ENCODE measurements at regions of chr7 and their contacts with region 1.

Region 1: DNA sequence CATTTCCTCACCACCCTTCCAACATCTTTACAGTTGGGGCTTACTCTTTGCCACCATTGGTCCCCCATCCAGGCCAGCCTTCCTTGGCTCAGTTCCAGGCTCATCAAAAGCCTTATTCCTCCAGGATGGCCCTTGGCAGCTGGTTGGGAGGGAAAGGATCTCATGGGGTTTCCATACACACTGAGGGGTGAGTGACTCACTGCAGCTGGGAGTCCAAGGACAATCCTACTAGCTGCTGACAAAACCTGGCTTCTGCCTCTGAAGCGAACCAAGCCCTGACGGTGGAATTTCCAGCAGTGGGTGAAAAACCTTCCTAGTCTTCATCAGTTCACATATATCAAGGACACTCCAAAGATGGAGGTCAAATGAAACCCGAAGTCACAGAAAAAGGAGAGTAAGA is 22.9 kb downstream of the CRHR2 start:
- DNase-seq: no peak
- ATAC-seq: no peak
- H3K4me3 ChIP-seq: no peak overlapping the region
- H3K27ac ChIP-seq: no peak overlapping the region
- H3K4me1 ChIP-seq: peaks cover 0 to 3% of the 10 kb centered on the region in 2 experiments; a peak in 1 of 5 replicates
- H3K27me3 ChIP-seq: peaks cover 4 to 69% of the 10 kb centered on the region in 2 experiments; a peak in 4 of 5 replicates
- CTCF ChIP-seq: no peak
- EP300 ChIP-seq: no peak
- POLR2A ChIP-seq: no peak
- RAD21 ChIP-seq: no peak

Region 2: GRCh38 chr7:30164567-30164966 is 494.7 kb before region 1 on chr7:
- CTCF ChIA-PET with region 1: no interaction called
- POLR2A ChIA-PET with region 1: no interaction called
- in situ Hi-C with region 1: no loop called
- intact Hi-C with region 1: no loop called
- DNase-seq: peak; percentile 37 to 59 (median 50)
- ATAC-seq: peak; percentile 70
- H3K4me3 ChIP-seq: no peak overlapping the region
- H3K27ac ChIP-seq: no peak overlapping the region
- H3K4me1 ChIP-seq: peaks cover 12 to 39% of the 10 kb centered on the region in 2 experiments
- H3K27me3 ChIP-seq: peaks cover 26 to 34% of the 10 kb centered on the region in 2 experiments
- CTCF ChIP-seq: peak; percentile 54 to 81 (median 63); a peak in 4 of 6 replicates
- EP300 ChIP-seq: no peak
- POLR2A ChIP-seq: no peak
- RAD21 ChIP-seq: peak; percentile 75 to 79

Region 3: GRCh38 chr7:30225863-30226613 is 433.3 kb before region 1 on chr7:
- CTCF ChIA-PET with region 1: no interaction called
- POLR2A ChIA-PET with region 1: no interaction called
- in situ Hi-C with region 1: no loop called
- intact Hi-C with region 1: no loop called
- DNase-seq: no peak
- ATAC-seq: no peak; the same call in 2 of the 3 replicates
- H3K4me3 ChIP-seq: no peak overlapping the region
- H3K27ac ChIP-seq: no peak overlapping the region
- H3K4me1 ChIP-seq: no peaks in the 10 kb centered on the region
- H3K27me3 ChIP-seq: peaks cover 5 to 41% of the 10 kb centered on the region in 2 experiments; a peak in 4 of 5 replicates
- CTCF ChIP-seq: no peak
- EP300 ChIP-seq: no peak
- POLR2A ChIP-seq: no peak
- RAD21 ChIP-seq: no peak

Region 4: GRCh38 chr7:30585675-30586074 is 73.6 kb before region 1 on chr7:
- CTCF ChIA-PET with region 1: no interaction called
- POLR2A ChIA-PET with region 1: no interaction called
- in situ Hi-C with region 1: no loop called
- intact Hi-C with region 1: no loop called
- DNase-seq: no peak
- ATAC-seq: no peak
- H3K4me3 ChIP-seq: no peak overlapping the region
- H3K27ac ChIP-seq: no peak overlapping the region
- H3K4me1 ChIP-seq: no peaks in the 10 kb centered on the region
- H3K27me3 ChIP-seq: no peaks in the 10 kb centered on the region
- CTCF ChIP-seq: no peak
- EP300 ChIP-seq: no peak
- POLR2A ChIP-seq: no peak
- RAD21 ChIP-seq: no peak

Region 5: DNA sequence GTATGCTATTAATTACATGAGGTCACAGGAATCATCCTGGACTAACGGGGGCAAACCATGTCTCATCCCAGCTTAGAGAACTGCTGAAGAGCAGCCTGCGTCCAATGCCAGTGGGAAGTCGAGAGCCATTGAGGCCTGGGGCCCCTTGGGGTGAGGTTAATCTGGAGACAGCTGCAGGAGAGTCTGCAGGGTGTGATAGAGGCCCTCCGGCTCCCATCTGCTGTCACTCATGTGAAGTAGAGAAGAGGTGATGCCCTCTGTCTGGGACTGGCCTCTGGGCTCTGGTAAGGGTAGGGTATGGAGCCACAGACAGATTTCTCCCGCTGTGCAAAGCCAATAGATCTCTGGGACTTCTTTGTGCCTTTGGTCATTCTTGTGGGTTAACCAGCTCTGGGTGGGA is 11.7 kb before region 1 on chr7:
- CTCF ChIA-PET with region 1: no interaction called
- POLR2A ChIA-PET with region 1: interaction called, 16 read pairs
- in situ Hi-C with region 1: no loop called
- intact Hi-C with region 1: no loop called
- DNase-seq: no peak
- ATAC-seq: peak; percentile 12; the same call in 2 of the 3 replicates
- H3K4me3 ChIP-seq: no peak overlapping the region
- H3K27ac ChIP-seq: no peak overlapping the region
- H3K4me1 ChIP-seq: no peaks in the 10 kb centered on the region; a peak in 1 of 5 replicates
- H3K27me3 ChIP-seq: peaks cover 0 to 9% of the 10 kb centered on the region in 2 experiments; a peak in 3 of 5 replicates
- CTCF ChIP-seq: no peak
- EP300 ChIP-seq: no peak
- POLR2A ChIP-seq: no peak
- RAD21 ChIP-seq: no peak

Region 6: DNA sequence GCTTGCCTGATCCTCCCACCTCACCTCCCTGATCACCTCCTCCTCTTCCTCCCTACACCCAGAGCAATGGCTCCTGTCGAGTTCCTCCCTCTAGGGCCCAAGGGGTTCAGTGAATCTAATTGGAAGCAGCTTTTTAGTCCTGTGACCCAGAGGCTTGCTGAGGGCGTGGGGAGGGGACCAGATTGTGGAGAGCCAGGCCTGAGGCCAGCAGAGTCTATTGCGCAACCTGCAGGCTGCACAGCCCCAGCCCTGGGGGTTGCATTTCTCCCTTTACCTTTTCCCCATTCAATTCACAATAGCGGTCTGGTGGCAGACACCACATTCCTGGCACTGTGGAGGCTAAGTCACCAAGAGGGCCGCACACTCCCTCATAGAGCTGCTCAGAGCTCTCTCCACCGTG is 336.9 kb after region 1 on chr7:
- CTCF ChIA-PET with region 1: no interaction called
- POLR2A ChIA-PET with region 1: no interaction called
- in situ Hi-C with region 1: no loop called
- intact Hi-C with region 1: no loop called
- DNase-seq: no peak
- ATAC-seq: no peak
- H3K4me3 ChIP-seq: no peak overlapping the region
- H3K27ac ChIP-seq: no peak overlapping the region
- H3K4me1 ChIP-seq: peaks cover 0 to 12% of the 10 kb centered on the region in 2 experiments; a peak in 3 of 5 replicates
- H3K27me3 ChIP-seq: peaks cover 18 to 59% of the 10 kb centered on the region in 2 experiments; a peak in 4 of 5 replicates
- CTCF ChIP-seq: no peak
- EP300 ChIP-seq: no peak
- POLR2A ChIP-seq: no peak
- RAD21 ChIP-seq: no peak